Naive thymus-derived CD4-positive, alpha-beta T cell (primary cell): ENCODE measurements at regions of chr4 and their contacts with region 1.

Region 1: GRCh38 chr4:2281575-2282343 is 19.9 kb upstream of the MXD4 start:
- DNase-seq: peak; percentile 51 to 96 (median 94)
- ATAC-seq: peak; percentile 95
- H3K4me3 ChIP-seq: peak overlapping the region; percentile 33
- H3K4me3 Mint-ChIP-seq: peak overlapping the region; percentile 73 to 90 (median 84)
- H3K27ac ChIP-seq: peak overlapping the region; percentile 81
- H3K27ac Mint-ChIP-seq: peak overlapping the region; percentile 91 to 100 (median 99)
- H3K4me1 ChIP-seq: peaks cover 31 to 34% of the 10 kb centered on the region in 2 donors
- H3K4me1 Mint-ChIP-seq: peaks cover 27 to 64% (median 50%) of the 10 kb centered on the region in 7 donors
- H3K27me3 ChIP-seq: no peaks in the 10 kb centered on the region
- H3K27me3 Mint-ChIP-seq: no peaks in the 10 kb centered on the region

Region 2: GRCh38 chr4:2194496-2194895 is 87.3 kb before region 1 on chr4:
- CTCF ChIA-PET with region 1: no interaction called
- POLR2A ChIA-PET with region 1: no interaction called
- intact Hi-C with region 1: no loop called
- DNase-seq: no peak
- ATAC-seq: no peak
- H3K4me3 ChIP-seq: no peak overlapping the region
- H3K4me3 Mint-ChIP-seq: no peak overlapping the region
- H3K27ac ChIP-seq: no peak overlapping the region
- H3K27ac Mint-ChIP-seq: no peak overlapping the region
- H3K4me1 ChIP-seq: no peaks in the 10 kb centered on the region
- H3K4me1 Mint-ChIP-seq: peaks cover 0 to 3% (median 0%) of the 10 kb centered on the region in 7 donors
- H3K27me3 ChIP-seq: no peaks in the 10 kb centered on the region
- H3K27me3 Mint-ChIP-seq: no peaks in the 10 kb centered on the region

Region 3: GRCh38 chr4:2354118-2354517 is 72.4 kb after region 1 on chr4:
- CTCF ChIA-PET with region 1: no interaction called
- POLR2A ChIA-PET with region 1: no interaction called
- intact Hi-C with region 1: loop called (anchors 1 to 10 kb)
- DNase-seq: peak in 5 of 9 donors; percentile 25 to 51 (median 44)
- ATAC-seq: peak; percentile 61
- H3K4me3 ChIP-seq: no peak overlapping the region
- H3K4me3 Mint-ChIP-seq: no peak overlapping the region
- H3K27ac ChIP-seq: no peak overlapping the region
- H3K27ac Mint-ChIP-seq: no peak overlapping the region
- H3K4me1 ChIP-seq: no peaks in the 10 kb centered on the region
- H3K4me1 Mint-ChIP-seq: peaks cover 0 to 11% (median 6%) of the 10 kb centered on the region in 7 donors
- H3K27me3 ChIP-seq: no peaks in the 10 kb centered on the region
- H3K27me3 Mint-ChIP-seq: no peaks in the 10 kb centered on the region

Region 4: DNA sequence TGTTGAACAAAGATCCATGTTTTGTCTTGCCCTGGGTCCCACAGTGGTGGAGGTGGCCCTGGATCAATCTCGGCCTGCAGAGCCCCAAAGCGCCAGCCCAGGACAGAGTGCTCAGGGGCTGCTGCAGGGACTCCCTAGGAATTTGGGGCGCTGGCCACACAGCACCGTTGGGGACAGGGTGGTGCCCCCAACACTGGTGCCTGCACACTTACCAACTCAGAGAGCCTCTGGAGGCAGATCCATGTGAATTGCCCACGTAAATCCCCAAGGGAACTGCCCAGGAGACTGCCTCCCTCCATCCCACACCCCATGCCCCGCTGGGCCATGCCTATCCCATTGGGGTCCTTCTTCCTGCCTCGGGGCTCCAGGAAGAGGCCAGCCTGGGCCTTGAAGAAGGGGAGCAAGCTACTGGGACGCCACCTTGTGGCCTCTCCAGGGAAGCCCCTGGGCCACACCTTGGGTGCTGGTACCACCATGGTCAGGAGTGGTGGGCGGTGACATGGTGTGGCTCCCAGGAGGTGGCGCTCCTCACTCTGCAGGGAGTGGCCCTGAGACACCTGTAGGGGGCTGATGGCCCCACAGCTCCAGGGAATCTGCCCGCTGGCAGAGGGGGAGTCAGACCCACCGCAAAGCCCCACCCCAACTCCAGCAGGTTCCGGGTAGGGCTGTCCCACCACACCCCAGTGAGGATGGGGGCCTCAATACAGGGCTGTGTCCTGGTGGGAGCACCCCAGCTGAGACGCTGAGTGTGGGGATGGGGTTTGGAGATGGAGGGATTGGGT is 159.8 kb after region 1 on chr4:
- CTCF ChIA-PET with region 1: no interaction called
- POLR2A ChIA-PET with region 1: no interaction called
- intact Hi-C with region 1: loop called in 1 of 2 experiments (anchors 1 kb)
- DNase-seq: peak; percentile 41 to 69 (median 57)
- ATAC-seq: peak; percentile 96
- H3K4me3 ChIP-seq: no peak overlapping the region
- H3K4me3 Mint-ChIP-seq: no peak overlapping the region
- H3K27ac ChIP-seq: no peak overlapping the region
- H3K27ac Mint-ChIP-seq: peak overlapping the region in 2 of 9 donors; percentile 4 to 20
- H3K4me1 ChIP-seq: peaks cover 0 to 4% of the 10 kb centered on the region in 2 donors
- H3K4me1 Mint-ChIP-seq: peaks cover 0 to 5% (median 3%) of the 10 kb centered on the region in 7 donors
- H3K27me3 ChIP-seq: no peaks in the 10 kb centered on the region
- H3K27me3 Mint-ChIP-seq: no peaks in the 10 kb centered on the region